Activated CD4-positive, alpha-beta memory T cell treated with anti-CD3 and anti-CD28 coated beads for 36 hours (primary cell): ENCODE measurements at regions of chr15 and their contacts with region 1.

Region 1: DNA sequence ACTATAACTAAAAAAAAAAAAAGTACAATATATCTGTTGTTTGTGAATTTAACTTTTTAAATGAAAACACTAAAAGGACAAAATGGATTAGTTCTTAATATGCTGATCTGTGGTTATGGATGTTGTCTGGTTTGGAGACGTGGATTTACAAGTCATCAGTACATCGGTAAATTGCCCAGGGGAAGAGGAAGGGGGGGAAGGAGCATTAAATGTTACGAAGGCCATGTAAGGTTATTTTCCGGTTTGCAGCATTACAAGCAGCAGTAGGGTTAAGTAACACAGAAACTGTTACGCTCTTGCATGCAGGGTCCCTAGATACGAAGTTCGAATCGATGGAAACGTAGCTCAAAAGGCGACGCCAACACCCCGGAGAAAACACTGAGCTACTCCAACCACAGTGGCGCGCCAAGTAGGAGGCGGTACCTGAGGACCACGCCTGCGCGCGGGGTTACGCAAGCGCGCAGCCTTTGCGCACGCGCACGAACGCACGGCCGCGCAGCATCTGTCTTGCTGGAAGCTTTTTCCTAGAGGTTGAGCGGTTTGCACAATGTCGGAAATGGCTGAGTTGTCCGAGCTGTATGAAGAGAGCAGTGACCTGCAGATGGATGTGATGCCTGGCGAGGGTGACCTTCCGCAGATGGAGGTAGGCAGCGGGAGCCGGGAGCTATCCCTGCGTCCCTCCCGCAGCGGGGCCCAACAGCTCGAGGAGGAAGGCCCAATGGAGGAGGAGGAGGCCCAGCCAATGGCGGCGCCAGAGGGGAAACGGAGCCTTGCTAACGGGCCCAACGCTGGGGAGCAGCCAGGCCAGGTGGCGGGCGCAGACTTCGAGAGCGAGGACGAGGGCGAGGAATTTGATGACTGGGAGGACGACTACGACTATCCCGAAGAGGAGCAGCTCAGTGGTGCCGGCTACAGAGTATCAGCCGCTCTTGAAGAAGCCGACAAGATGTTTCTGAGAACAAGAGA is at the start of gene EID1:
- DNase-seq: peak; percentile 96
- H3K4me3 Mint-ChIP-seq: peak within 1 kb of the TSS; percentile 99
- H3K27ac Mint-ChIP-seq: peak within 1 kb of the TSS; percentile 96
- H3K4me1 Mint-ChIP-seq: peaks cover 44% of the 10 kb centered on the region
- H3K27me3 Mint-ChIP-seq: peaks cover 12% of the 10 kb centered on the region
- total RNA-seq, gene EID1: 88.3 to 90.0 TPM

Region 2: DNA sequence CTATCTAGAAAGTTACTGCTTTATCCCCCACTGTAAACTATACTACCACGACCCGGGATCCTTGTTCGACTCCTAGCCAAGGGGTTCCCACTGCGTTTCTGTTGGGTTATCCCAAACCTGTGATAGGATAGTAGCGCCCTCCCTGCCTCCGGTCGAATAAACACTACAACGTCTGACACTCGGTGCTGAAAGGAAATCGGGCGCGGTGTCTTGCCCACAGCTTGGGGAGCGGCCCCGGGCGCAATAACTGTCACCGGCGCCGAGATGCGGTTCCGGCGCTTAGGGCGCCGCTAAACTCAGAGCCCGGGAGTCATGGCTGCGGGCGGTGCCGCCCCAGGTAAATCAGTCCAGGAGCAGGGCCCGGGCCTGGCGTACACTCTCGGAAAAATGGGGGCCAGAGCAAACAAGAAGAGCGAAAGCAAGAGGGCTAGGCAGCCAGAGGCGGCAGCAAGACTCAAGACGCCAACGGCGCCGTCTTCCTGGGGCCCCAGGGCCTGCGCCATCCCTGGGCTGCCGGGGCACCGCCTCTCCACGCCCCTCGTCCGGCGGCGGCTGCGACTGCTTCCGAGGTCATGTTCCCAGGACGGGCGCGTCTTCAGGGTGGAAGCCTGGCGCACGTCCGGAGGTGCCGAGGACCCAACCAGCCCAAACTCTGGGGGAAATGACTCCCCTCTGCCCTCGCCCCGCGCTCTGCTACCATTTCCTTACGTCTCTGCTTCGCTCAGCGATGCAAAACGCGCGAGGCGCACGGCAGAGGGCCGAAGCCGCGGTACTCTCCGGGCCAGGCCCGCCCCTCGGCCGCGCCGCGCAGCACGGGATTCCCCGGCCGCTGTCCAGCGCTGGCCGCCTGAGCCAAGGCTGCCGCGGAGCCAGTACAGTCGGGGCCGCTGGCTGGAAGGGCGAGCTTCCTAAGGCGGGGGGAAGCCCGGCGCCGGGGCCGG is 546.8 kb before region 1 on chr15 and contains the start of gene DUT:
- CTCF ChIA-PET with region 1: no interaction called
- POLR2A ChIA-PET with region 1: no interaction called
- intact Hi-C with region 1: loop called (anchors 5 kb)
- DNase-seq: peak; percentile 87
- H3K4me3 Mint-ChIP-seq: peak within 1 kb of the TSS; percentile 99
- H3K27ac Mint-ChIP-seq: peak within 1 kb of the TSS; percentile 99
- H3K4me1 Mint-ChIP-seq: peaks cover 37% of the 10 kb centered on the region
- H3K27me3 Mint-ChIP-seq: no peaks in the 10 kb centered on the region
- total RNA-seq, gene DUT: 518 to 542 TPM

Region 3: GRCh38 chr15:48861813-48862431 is 16.0 kb before region 1 on chr15:
- CTCF ChIA-PET with region 1: interaction called, 13 read pairs
- POLR2A ChIA-PET with region 1: interaction called, 4 read pairs
- intact Hi-C with region 1: no loop called
- DNase-seq: peak; percentile 32
- H3K4me3 Mint-ChIP-seq: no peak overlapping the region
- H3K27ac Mint-ChIP-seq: no peak overlapping the region
- H3K4me1 Mint-ChIP-seq: peaks cover 6% of the 10 kb centered on the region
- H3K27me3 Mint-ChIP-seq: peaks cover 4% of the 10 kb centered on the region

Region 4: DNA sequence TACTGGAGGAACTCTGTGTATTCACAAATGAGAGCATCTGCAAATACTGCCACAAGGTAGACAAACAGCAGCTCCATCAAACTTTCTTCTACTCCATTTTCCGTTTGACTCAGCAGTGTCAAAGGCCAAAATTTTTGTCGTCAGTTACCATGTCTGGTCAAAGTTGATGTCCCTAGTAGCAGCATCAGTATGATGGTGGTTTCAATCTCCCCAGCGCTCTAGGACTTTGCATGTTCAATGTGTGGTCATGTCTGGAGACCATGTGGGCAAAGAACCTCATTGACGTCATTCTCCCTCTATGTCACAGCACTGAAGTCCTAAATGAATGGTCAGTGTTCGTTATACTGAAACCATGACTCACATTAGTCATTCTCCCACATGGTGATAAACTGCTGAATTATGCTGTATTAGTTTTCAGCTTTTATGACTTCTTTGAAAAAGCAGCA is 62.6 kb after region 1 on chr15:
- CTCF ChIA-PET with region 1: no interaction called
- POLR2A ChIA-PET with region 1: interaction called, 4 read pairs
- intact Hi-C with region 1: loop called (anchors 5 kb)
- DNase-seq: peak; percentile 45
- H3K4me3 Mint-ChIP-seq: no peak overlapping the region
- H3K27ac Mint-ChIP-seq: peak overlapping the region; percentile 42
- H3K4me1 Mint-ChIP-seq: peaks cover 14% of the 10 kb centered on the region
- H3K27me3 Mint-ChIP-seq: peaks cover 22% of the 10 kb centered on the region

Region 5: DNA sequence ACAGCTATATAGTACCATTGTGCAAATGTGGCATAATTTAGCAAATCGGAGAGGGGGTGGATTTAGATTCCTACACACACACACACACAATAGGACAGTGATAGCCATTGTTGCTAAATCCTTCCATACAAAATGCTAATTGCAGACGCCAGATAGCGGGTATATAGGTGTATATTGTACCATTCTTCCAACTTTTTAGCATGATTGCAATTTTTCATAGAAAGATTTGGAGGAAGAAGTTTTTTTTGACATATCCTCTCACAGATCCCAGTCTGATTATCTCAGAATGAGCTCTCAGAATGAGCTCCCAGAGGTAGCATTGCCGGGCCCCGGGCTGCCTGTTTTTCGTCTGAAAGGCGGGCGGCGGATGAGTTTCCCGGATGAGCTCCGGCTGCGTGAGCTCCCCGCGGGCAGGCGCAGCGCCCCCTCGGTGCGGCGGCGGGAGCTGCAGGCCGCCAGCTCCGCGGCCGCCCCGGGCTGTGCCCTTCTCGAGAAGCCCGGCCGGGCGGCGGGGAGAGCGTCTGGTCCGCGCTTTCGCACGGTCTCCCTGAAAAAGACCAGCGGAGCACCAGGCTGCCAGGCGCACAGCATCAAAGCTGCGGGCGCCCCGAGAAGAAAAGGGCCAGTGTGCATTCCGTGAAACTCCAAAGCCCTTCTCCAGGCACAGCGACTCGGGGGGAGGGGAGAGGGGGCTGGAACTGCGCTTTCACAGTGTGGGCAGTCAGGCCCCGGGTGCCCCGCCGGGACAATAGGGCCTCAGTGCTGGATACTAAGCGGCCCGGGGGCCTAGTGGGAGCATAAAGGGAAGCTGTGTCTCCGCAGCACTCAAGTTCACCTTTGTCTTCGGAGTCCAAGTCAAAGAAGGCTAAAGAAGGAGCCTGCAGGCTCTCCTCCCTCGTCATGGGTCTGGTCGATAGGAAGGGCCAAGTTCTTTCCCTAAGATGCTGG is 97.8 kb after region 1 on chr15:
- CTCF ChIA-PET with region 1: interaction called, 19 read pairs
- POLR2A ChIA-PET with region 1: interaction called, 7 read pairs
- intact Hi-C with region 1: no loop called
- DNase-seq: peak; percentile 83
- H3K4me3 Mint-ChIP-seq: peak overlapping the region; percentile 39
- H3K27ac Mint-ChIP-seq: no peak overlapping the region
- H3K4me1 Mint-ChIP-seq: no peaks in the 10 kb centered on the region
- H3K27me3 Mint-ChIP-seq: peaks cover 19% of the 10 kb centered on the region

Region 6: GRCh38 chr15:49155110-49155833 is 277.4 kb after region 1 on chr15 and contains the start of gene COPS2:
- CTCF ChIA-PET with region 1: interaction called, 4 read pairs
- POLR2A ChIA-PET with region 1: interaction called, 7 read pairs
- intact Hi-C with region 1: loop called (anchors 1 kb)
- DNase-seq: peak; percentile 97
- H3K4me3 Mint-ChIP-seq: peak within 1 kb of the TSS; percentile 99
- H3K27ac Mint-ChIP-seq: peak within 1 kb of the TSS; percentile 97
- H3K4me1 Mint-ChIP-seq: peaks cover 50% of the 10 kb centered on the region
- H3K27me3 Mint-ChIP-seq: no peaks in the 10 kb centered on the region
- total RNA-seq, gene COPS2: 79.8 to 80.0 TPM

Region 7: DNA sequence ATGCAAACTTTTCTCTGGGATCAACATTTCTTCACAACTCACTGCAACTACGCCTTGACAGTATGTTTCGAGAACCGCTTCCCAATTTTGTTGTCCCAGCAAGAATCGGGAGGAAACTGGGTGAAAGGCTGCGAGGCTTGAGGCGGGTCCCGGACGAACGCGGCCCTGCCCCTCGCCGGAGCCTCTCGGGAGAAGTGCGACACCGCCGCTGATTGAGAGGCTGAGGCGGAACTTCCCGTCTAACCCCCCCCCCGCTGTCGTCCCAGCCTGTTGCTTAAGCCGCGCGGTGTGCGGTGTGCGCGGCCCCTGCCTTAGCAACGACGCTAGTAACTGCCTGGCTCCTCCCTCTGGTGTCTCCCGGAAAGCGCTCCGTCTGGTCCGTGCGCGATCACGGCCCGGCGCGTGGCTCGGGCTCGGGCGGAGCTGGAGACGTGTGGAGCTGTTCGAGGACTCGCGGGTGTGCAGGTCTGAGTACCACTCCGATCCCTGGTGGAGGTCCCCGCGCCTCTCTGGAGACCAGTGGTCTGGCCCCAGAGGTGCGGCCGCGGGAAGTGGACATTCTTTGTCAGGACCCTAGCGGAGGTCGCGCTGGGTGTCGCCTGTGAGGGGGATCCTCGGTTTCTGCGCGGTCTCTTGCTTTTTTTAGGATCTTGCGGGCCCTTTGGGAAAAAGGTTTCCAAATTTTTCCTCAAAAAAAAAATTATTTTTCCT is 742.9 kb after region 1 on chr15 and contains the starts of genes DTWD1 and FAM227B:
- CTCF ChIA-PET with region 1: no interaction called
- POLR2A ChIA-PET with region 1: no interaction called
- intact Hi-C with region 1: loop called (anchors 1 kb)
- DNase-seq: peak; percentile 96
- H3K4me3 Mint-ChIP-seq: peak within 1 kb of the TSS; percentile 94
- H3K27ac Mint-ChIP-seq: peak within 1 kb of the TSS; percentile 92
- H3K4me1 Mint-ChIP-seq: peaks cover 32% of the 10 kb centered on the region
- H3K27me3 Mint-ChIP-seq: no peaks in the 10 kb centered on the region
- total RNA-seq, gene DTWD1: 14.3 to 18.5 TPM
- total RNA-seq, gene FAM227B: 2.8 to 3.8 TPM